ENCODE measurements at regions of chr2 and their contacts with region 1.

Region 1: DNA sequence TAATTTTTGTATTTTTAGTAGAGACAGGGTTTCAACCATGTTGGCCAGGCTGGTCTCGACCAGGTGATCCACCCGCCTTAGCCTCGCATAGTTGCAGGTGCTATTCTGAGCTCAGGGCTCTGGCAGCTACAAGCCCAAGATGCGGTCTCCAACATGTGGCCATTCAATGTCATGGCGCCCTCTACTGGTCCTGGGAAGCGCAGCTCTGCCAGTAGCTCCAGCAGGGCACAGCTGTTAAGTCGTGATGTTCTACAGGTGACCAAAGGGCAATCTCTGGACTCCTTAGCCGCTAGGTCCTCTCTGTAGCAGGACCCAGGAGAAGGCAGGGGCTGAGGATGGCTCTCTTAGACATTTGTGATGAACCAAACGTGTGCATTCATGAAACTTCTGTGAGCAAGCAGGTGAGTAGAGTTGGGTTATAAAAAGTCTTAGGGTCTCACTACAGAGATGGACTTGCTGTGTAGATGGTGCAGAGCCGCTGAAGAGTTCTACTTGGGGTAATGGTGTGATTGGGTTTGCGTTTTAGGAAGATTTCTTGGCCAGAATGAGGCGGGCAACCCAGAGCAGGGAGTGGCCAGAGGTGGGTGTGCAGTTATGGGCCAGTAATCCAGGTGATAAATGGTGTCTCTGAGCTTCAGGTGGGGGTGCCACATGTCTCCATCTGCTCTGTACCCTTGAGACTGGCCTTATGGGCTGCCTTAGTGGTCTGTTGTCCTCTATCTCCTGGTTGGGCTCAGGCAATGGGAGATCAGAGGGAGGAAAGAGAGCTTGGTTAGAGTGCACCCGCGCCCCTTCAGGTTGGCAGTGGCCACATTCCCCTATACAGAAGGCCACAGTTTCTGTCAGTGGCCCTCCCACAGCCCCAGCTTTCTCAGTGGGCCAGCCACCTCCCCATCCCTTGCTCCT is 31.0 kb downstream of the IL37 start:
- DNase-seq: peak; percentile 83 to 92 (median 85)
- H3K4me3 ChIP-seq: no peak overlapping the region
- H3K27ac ChIP-seq: no peak overlapping the region
- H3K4me1 ChIP-seq: peaks cover 0 to 6% (median 0%) of the 10 kb centered on the region in 3 donors
- H3K27me3 ChIP-seq: no peaks in the 10 kb centered on the region
- CTCF ChIP-seq: peak; percentile 72

Region 2: DNA sequence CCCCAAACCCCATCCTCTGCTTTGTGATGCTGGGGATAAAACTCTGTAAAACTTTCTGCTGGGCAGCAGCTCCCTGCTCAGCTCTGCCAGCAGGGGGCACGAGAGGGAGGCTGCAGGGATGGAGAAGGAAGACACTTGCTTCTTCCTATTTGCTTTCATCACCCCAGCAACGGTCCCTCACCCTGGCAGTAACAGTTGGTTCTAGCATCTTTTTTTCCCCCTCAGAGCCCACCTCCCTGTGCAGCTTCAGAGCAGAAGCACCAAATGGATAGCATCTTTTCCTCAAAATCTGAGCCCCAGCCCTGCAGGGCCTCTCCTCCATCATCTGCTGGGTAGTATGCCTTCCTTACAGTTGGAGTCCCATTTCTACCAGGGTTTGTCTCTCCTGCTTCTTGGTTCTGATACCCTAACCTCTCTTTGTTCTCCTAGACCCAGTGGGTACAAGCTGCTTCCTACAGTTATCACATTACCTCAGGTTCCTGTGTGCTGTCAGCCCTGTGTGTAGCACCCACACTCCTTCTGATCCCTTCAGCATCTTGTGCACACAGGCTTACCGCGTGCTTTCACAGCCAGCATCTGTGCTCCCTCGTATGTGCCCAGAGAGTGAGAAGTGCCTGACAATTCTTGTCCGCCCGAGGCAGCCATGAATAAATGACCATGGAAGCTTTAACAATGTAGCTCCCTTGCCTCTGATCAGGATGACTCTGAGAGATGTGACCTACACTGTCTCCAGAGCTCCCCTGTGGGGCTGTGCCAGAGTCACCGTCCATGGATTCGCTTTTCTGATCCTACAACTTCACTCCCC is 192.0 kb before region 1 on chr2:
- intact Hi-C with region 1: loop called (anchors 10 kb)
- DNase-seq: peak; percentile 75 to 87 (median 81)
- H3K4me3 ChIP-seq: no peak overlapping the region
- H3K27ac ChIP-seq: no peak overlapping the region
- H3K4me1 ChIP-seq: peaks cover 0 to 3% (median 0%) of the 10 kb centered on the region in 3 donors
- H3K27me3 ChIP-seq: no peaks in the 10 kb centered on the region
- CTCF ChIP-seq: peak; percentile 86

Region 3: GRCh38 chr2:112772322-112772721 is 169.7 kb before region 1 on chr2:
- intact Hi-C with region 1: no loop called
- DNase-seq: no peak
- H3K4me3 ChIP-seq: no peak overlapping the region
- H3K27ac ChIP-seq: no peak overlapping the region
- H3K4me1 ChIP-seq: no peaks in the 10 kb centered on the region
- H3K27me3 ChIP-seq: no peaks in the 10 kb centered on the region
- CTCF ChIP-seq: no peak